CD8-positive, alpha-beta T cell (primary cell): ENCODE measurements at regions of chr21 and their contacts with region 1.

Region 1: DNA sequence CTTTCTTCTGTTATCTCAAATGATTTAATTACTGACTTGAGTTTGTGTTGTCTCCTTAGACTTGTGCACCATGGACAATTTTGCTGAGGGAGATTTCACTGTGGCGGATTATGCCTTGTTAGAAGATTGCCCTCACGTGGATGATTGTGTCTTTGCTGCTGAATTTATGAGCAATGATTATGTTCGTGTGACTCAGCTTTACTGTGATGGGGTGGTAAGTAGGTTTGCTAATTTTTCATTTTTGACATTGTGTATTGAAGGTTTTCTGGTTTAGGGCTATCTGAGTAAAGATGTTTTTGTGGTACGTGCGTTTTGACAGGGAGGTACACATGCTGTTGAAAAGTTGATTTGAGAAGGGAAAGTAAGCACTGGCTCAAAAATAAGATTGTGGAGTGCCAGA is 14.1 kb downstream of the TTC3 start:
- DNase-seq: peak in 3 of 9 experiments; percentile 23 to 45 (median 27)
- ATAC-seq: peak; percentile 48
- H3K4me3 ChIP-seq: no peak overlapping the region
- H3K4me3 Mint-ChIP-seq: no peak overlapping the region
- H3K27ac ChIP-seq: no peak overlapping the region
- H3K27ac Mint-ChIP-seq: no peak overlapping the region
- H3K4me1 ChIP-seq: peaks cover 10% of the 10 kb centered on the region
- H3K4me1 Mint-ChIP-seq: peaks cover 21% of the 10 kb centered on the region
- H3K27me3 ChIP-seq: no peaks in the 10 kb centered on the region
- H3K27me3 Mint-ChIP-seq: no peaks in the 10 kb centered on the region
- CTCF ChIP-seq: peak; percentile 21

Region 2: GRCh38 chr21:36976882-36977651 is 110.1 kb before region 1 on chr21:
- CTCF ChIA-PET with region 1: no interaction called
- POLR2A ChIA-PET with region 1: no interaction called
- intact Hi-C with region 1: loop called in 1 of 2 experiments (anchors 1 kb)
- DNase-seq: peak in 5 of 9 experiments; percentile 23 to 75 (median 62)
- ATAC-seq: peak; percentile 77
- H3K4me3 ChIP-seq: no peak overlapping the region
- H3K4me3 Mint-ChIP-seq: no peak overlapping the region
- H3K27ac ChIP-seq: peak overlapping the region in 1 of 2 experiments; percentile 28
- H3K27ac Mint-ChIP-seq: peak overlapping the region; percentile 80
- H3K4me1 ChIP-seq: peaks cover 8% of the 10 kb centered on the region
- H3K4me1 Mint-ChIP-seq: peaks cover 23% of the 10 kb centered on the region
- H3K27me3 ChIP-seq: no peaks in the 10 kb centered on the region
- H3K27me3 Mint-ChIP-seq: peaks cover 2% of the 10 kb centered on the region
- CTCF ChIP-seq: peak; percentile 46